PC-9 (cell line): ENCODE measurements at regions of chr2 and their contacts with region 1.

Region 1: DNA sequence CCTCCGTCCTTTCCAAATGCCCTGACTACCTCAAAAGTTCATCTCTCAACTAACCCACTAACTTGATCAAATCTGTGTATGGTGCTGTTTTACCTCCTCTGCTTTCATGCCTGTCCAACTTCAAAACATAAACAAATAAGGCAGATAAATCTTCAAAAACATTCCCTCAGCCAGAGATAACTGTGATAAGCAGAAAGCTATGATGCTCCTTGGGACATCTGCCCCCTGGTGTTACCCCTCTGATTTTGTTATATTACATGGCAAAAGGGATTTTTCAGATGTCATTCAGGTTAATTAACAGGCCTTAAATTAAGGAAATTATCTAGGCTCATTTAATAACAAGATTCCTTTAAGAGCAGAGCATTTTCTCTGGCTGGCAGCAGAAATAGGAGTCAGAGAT is 810.8 kb upstream of the CHAC2 start:
- DNase-seq: no peak
- H3K4me3 ChIP-seq: no peak overlapping the region
- H3K27ac ChIP-seq: no peak overlapping the region
- H3K4me1 ChIP-seq: no peaks in the 10 kb centered on the region
- H3K27me3 ChIP-seq: no peaks in the 10 kb centered on the region
- CTCF ChIP-seq: peak; percentile 41; the same call in 1 of the 2 replicates

Region 2: GRCh38 chr2:52608030-52608429 is 348.7 kb before region 1 on chr2:
- CTCF ChIA-PET with region 1: no interaction called
- POLR2A ChIA-PET with region 1: no interaction called
- intact Hi-C with region 1: loop called (anchors 5 kb)
- DNase-seq: no peak
- H3K4me3 ChIP-seq: no peak overlapping the region
- H3K27ac ChIP-seq: no peak overlapping the region
- H3K4me1 ChIP-seq: no peaks in the 10 kb centered on the region
- H3K27me3 ChIP-seq: no peaks in the 10 kb centered on the region
- CTCF ChIP-seq: no peak

Region 3: GRCh38 chr2:52775674-52776073 is 181.1 kb before region 1 on chr2:
- CTCF ChIA-PET with region 1: no interaction called
- POLR2A ChIA-PET with region 1: no interaction called
- intact Hi-C with region 1: no loop called
- DNase-seq: no peak
- H3K4me3 ChIP-seq: no peak overlapping the region
- H3K27ac ChIP-seq: no peak overlapping the region
- H3K4me1 ChIP-seq: no peaks in the 10 kb centered on the region
- H3K27me3 ChIP-seq: no peaks in the 10 kb centered on the region
- CTCF ChIP-seq: no peak

Region 4: GRCh38 chr2:53018825-53019425 is 62.2 kb after region 1 on chr2:
- CTCF ChIA-PET with region 1: no interaction called
- POLR2A ChIA-PET with region 1: no interaction called
- intact Hi-C with region 1: no loop called
- DNase-seq: no peak
- H3K4me3 ChIP-seq: no peak overlapping the region
- H3K27ac ChIP-seq: no peak overlapping the region
- H3K4me1 ChIP-seq: no peaks in the 10 kb centered on the region
- H3K27me3 ChIP-seq: no peaks in the 10 kb centered on the region
- CTCF ChIP-seq: peak; percentile 41